CD14-positive monocyte (primary cell): ENCODE measurements at regions of chr3 and their contacts with region 1.

Region 1: GRCh38 chr3:151384741-151385174 is at the start of gene P2RY12:
- DNase-seq: peak; percentile 54 to 79 (median 73)
- H3K4me3 ChIP-seq: peak within 1 kb of the TSS in 2 of 3 experiments; percentile 33 to 67
- H3K4me3 Mint-ChIP-seq: peak within 1 kb of the TSS; percentile 53 to 78
- H3K27ac ChIP-seq: peak within 1 kb of the TSS; percentile 21 to 74
- H3K27ac Mint-ChIP-seq: peak within 1 kb of the TSS; percentile 64 to 92 (median 87)
- H3K4me1 ChIP-seq: peaks cover 52 to 67% of the 10 kb centered on the region in 2 donors
- H3K4me1 Mint-ChIP-seq: peaks cover 66% of the 10 kb centered on the region
- H3K27me3 ChIP-seq: no peaks in the 10 kb centered on the region
- H3K27me3 Mint-ChIP-seq: peaks cover 0 to 2% (median 0%) of the 10 kb centered on the region in 3 donors
- CTCF ChIP-seq: no peak
- polyA plus RNA-seq, gene P2RY12: 1.9 to 3.0 (median 2.7) TPM

Region 2: DNA sequence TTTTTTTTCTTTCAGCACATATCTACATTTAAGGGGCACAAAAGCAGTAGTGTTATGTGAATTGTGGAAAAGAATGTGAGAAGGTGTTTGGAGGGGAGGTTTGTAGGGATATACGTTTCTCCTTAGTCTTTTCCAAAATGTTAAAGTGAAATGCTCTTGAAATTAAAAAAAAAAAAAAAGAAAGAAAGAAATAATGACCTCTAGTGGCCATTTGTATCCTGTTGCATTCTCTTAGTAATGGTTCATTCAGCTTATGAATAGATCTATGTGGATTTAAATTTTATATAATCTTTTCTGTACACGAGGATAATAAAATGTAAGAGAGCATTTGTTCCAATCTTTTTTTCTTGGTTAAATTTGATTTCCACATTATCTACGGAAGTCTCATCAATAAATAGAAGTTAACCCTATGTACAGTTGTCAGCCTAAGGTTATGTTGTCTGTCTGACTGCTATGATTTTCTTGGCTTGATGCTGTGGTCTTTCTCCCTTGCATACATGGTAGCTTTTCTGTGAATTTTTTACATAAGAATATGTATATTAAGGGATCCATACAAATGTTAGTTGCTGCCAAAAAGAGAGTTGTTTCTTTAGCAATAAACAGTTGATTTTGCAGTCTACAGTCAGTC is 57.1 kb before region 1 on chr3:
- intact Hi-C with region 1: loop called (anchors 5 to 10 kb)
- DNase-seq: peak in 1 of 3 donors; percentile 43
- H3K4me3 ChIP-seq: peak overlapping the region; percentile 52 to 99 (median 83)
- H3K4me3 Mint-ChIP-seq: peak overlapping the region; percentile 90 to 98
- H3K27ac ChIP-seq: peak overlapping the region in 1 of 2 donors; percentile 87
- H3K27ac Mint-ChIP-seq: peak overlapping the region; percentile 72 to 96 (median 95)
- H3K4me1 ChIP-seq: peaks cover 55 to 78% of the 10 kb centered on the region in 2 donors
- H3K4me1 Mint-ChIP-seq: peaks cover 71% of the 10 kb centered on the region
- H3K27me3 ChIP-seq: no peaks in the 10 kb centered on the region
- H3K27me3 Mint-ChIP-seq: peaks cover 0 to under 1% (median 0%) of the 10 kb centered on the region in 3 donors
- CTCF ChIP-seq: peak; percentile 82

Region 3: GRCh38 chr3:151345859-151346258 is 38.9 kb before region 1 on chr3:
- intact Hi-C with region 1: loop called in 1 of 2 experiments (anchors 5 kb)
- DNase-seq: peak in 2 of 3 donors; percentile 32
- H3K4me3 ChIP-seq: peak overlapping the region; percentile 40 to 71 (median 65)
- H3K4me3 Mint-ChIP-seq: peak overlapping the region; percentile 64 to 89
- H3K27ac ChIP-seq: peak overlapping the region; percentile 68 to 82
- H3K27ac Mint-ChIP-seq: peak overlapping the region; percentile 93 to 98 (median 96)
- H3K4me1 ChIP-seq: peaks cover 58 to 63% of the 10 kb centered on the region in 2 donors
- H3K4me1 Mint-ChIP-seq: peaks cover 53% of the 10 kb centered on the region
- H3K27me3 ChIP-seq: no peaks in the 10 kb centered on the region
- H3K27me3 Mint-ChIP-seq: no peaks in the 10 kb centered on the region
- CTCF ChIP-seq: no peak

Region 4: DNA sequence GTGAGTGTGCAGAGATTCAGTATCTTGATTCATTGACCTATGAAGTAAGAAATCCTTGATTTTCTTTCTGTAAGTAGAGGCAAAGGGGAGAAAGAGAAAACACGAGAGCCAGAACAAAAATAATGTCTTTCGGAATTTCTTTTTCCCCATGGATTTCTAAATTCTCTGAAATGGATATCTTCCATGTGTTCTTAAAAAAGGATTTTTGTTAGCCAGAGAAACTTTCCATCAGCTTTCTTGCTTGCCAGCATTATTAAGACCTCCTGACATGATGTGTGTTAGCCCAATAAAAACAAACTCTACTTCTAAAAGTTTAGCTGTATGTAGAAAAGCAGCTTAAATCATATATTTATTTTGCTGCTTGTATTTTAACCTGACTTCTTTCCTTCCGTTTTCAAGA is 226.7 kb after region 1 on chr3:
- intact Hi-C with region 1: no loop called
- DNase-seq: no peak
- H3K4me3 ChIP-seq: no peak overlapping the region
- H3K4me3 Mint-ChIP-seq: no peak overlapping the region
- H3K27ac ChIP-seq: no peak overlapping the region
- H3K27ac Mint-ChIP-seq: no peak overlapping the region
- H3K4me1 ChIP-seq: no peaks in the 10 kb centered on the region
- H3K4me1 Mint-ChIP-seq: peaks cover 2% of the 10 kb centered on the region
- H3K27me3 ChIP-seq: no peaks in the 10 kb centered on the region
- H3K27me3 Mint-ChIP-seq: peaks cover 0 to 2% (median 1%) of the 10 kb centered on the region in 3 donors
- CTCF ChIP-seq: no peak